WTC11 (cell line): ENCODE measurements at regions of chr3 and their contacts with region 1.

Region 1: DNA sequence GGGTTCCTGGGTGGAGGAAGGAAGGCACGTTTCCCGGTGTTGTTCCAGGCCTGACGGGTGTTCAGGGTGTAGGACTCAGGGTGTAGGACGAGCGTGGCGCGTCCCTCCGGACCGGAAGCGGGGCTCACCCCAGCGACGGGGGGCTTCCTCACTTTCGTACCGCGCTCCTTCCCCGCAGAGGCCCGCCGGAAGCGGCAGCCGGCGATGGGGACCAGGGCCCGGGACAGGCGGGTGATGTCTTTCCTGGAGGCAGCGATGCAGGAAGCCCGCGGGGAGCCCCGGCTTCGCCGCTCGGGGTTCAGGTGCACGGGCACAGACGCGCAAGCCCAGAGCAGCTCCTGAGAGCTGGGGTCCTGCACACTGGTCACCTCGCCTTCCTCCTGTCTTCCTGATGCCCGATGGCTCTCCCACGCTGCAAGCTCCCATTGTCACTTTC is 13.4 kb downstream of the FOXL2NB start:
- DNase-seq: no peak
- ATAC-seq: no peak; the same call in 1 of the 2 replicates
- H3K4me3 Mint-ChIP-seq: peak overlapping the region; percentile 34
- H3K27ac Mint-ChIP-seq: no peak overlapping the region
- H3K4me1 Mint-ChIP-seq: peaks cover 3% of the 10 kb centered on the region; the same call in 1 of the 2 replicates
- H3K27me3 Mint-ChIP-seq: peaks cover 43% of the 10 kb centered on the region
- CTCF ChIP-seq: no peak

Region 2: GRCh38 chr3:138747225-138747624 is 213.2 kb before region 1 on chr3:
- CTCF ChIA-PET with region 1: no interaction called
- POLR2A ChIA-PET with region 1: no interaction called
- DNase-seq: no peak
- ATAC-seq: no peak
- H3K4me3 Mint-ChIP-seq: no peak overlapping the region
- H3K27ac Mint-ChIP-seq: no peak overlapping the region
- H3K4me1 Mint-ChIP-seq: no peaks in the 10 kb centered on the region
- H3K27me3 Mint-ChIP-seq: no peaks in the 10 kb centered on the region
- CTCF ChIP-seq: no peak

Region 3: DNA sequence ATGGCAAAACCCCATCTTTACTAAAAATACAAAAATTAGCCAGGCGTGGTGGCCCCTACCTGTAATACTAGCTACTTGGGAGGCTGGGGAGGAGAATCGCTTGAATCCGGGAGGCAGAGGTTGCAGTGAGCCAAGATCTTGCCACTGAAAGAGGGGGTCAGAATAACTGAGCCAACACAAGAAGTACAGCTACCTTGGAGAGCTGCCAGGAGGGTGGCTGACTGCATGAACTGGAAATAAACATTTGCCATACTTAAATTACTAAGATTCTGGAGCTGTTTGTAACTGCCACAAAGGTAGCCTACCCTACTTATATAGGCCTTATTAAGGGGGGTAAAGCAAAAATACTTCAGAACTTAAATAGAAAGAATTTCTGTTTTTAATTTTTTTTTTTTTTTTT is 110.3 kb before region 1 on chr3:
- CTCF ChIA-PET with region 1: no interaction called
- POLR2A ChIA-PET with region 1: no interaction called
- DNase-seq: no peak
- ATAC-seq: no peak
- H3K4me3 Mint-ChIP-seq: no peak overlapping the region
- H3K27ac Mint-ChIP-seq: no peak overlapping the region
- H3K4me1 Mint-ChIP-seq: peaks cover 31% of the 10 kb centered on the region
- H3K27me3 Mint-ChIP-seq: no peaks in the 10 kb centered on the region
- CTCF ChIP-seq: no peak

Region 4: GRCh38 chr3:138974462-138974861 is 14.0 kb after region 1 on chr3:
- CTCF ChIA-PET with region 1: interaction called, 28 read pairs
- POLR2A ChIA-PET with region 1: interaction called, 3 read pairs
- DNase-seq: no peak
- ATAC-seq: no peak
- H3K4me3 Mint-ChIP-seq: no peak overlapping the region
- H3K27ac Mint-ChIP-seq: no peak overlapping the region
- H3K4me1 Mint-ChIP-seq: no peaks in the 10 kb centered on the region
- H3K27me3 Mint-ChIP-seq: 0 out of 2 replicates have a peak, but pooled peaks cover 6% of the 10 kb centered on the region
- CTCF ChIP-seq: no peak

Region 5: GRCh38 chr3:139173372-139174108 is 213.1 kb after region 1 on chr3:
- CTCF ChIA-PET with region 1: no interaction called
- POLR2A ChIA-PET with region 1: no interaction called
- DNase-seq: no peak
- ATAC-seq: no peak
- H3K4me3 Mint-ChIP-seq: no peak overlapping the region
- H3K27ac Mint-ChIP-seq: no peak overlapping the region
- H3K4me1 Mint-ChIP-seq: no peaks in the 10 kb centered on the region
- H3K27me3 Mint-ChIP-seq: peaks cover 16% of the 10 kb centered on the region
- CTCF ChIP-seq: no peak